K562 (cell line): ENCODE measurements at regions of chr20 and their contacts with region 1.

Region 1: GRCh38 chr20:50460460-50461267 is 49.5 kb upstream of the PTPN1 start:
- DNase-seq: peak; percentile 86 to 88 (median 87)
- ATAC-seq: peak; percentile 96
- H3K4me3 ChIP-seq: no peak overlapping the region
- H3K27ac ChIP-seq: no peak overlapping the region; the same call in 2 of the 3 replicates
- H3K4me1 ChIP-seq: peaks cover 24 to 26% of the 10 kb centered on the region in 2 experiments
- H3K27me3 ChIP-seq: no peaks in the 10 kb centered on the region; a peak in 1 of 5 replicates
- CTCF ChIP-seq: peak; percentile 92 to 96 (median 94)
- EP300 ChIP-seq: no peak
- POLR2A ChIP-seq: no peak
- RAD21 ChIP-seq: peak; percentile 96 to 98

Region 2: DNA sequence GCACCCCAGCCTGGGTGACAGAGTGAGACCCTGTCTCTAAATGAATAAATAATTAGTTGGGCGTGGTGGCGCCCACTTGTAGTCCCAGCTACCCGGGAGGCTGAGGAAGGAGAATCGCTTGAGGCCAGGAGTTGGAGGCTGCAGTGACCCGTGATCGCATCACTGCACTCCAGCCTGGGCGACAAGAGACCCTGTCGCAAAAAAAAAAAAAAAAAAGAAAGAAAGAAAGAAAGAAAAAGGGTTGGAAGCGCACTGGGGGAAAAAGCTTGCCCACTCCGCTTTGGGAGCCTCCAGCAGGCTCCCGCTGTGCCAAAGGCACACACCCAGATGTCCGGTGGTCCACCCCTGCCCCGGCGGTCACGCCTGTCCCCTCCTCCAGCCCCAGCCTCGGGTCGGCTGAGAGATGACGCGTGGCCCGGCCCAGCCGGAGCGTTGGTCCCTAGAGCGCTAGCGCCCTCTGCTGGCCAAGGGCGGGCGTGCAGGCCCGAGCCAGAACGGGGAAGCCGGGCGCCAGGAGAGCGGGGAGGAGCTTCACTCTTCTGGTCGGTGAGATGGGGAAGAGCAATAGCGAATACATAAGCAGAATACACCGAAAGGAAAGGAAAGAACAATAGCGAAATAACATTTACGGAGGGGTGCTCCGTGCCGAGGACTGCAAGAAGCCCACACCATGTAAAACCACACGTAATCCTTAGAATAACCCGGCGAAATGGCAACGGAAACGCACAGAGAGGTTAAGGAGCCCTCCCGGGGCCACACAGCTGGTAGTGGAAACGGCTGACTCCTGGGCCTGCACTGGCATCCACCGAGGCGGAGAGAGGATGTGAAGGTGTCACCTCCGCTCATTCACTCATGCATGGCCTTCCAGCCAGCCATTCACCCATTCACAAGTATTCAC is 389.4 kb before region 1 on chr20:
- CTCF ChIA-PET with region 1: no interaction called
- POLR2A ChIA-PET with region 1: no interaction called
- in situ Hi-C with region 1: no loop called
- intact Hi-C with region 1: loop called (anchors 10 kb)
- DNase-seq: peak; percentile 92 to 96 (median 94)
- ATAC-seq: peak; percentile 99
- H3K4me3 ChIP-seq: peak overlapping the region; percentile 27
- H3K27ac ChIP-seq: peak overlapping the region; percentile 50; the same call in 2 of the 3 replicates
- H3K4me1 ChIP-seq: peaks cover 2 to 27% of the 10 kb centered on the region in 2 experiments; a peak in 4 of 5 replicates
- H3K27me3 ChIP-seq: no peaks in the 10 kb centered on the region
- CTCF ChIP-seq: peak; percentile 98 to 99 (median 99)
- EP300 ChIP-seq: 0 out of 2 replicates have a peak, but pooled peaks have one; percentile 28
- POLR2A ChIP-seq: 0 out of 2 replicates have a peak, but pooled peaks have one; percentile 38
- RAD21 ChIP-seq: peak; percentile 99 to 100

Region 3: DNA sequence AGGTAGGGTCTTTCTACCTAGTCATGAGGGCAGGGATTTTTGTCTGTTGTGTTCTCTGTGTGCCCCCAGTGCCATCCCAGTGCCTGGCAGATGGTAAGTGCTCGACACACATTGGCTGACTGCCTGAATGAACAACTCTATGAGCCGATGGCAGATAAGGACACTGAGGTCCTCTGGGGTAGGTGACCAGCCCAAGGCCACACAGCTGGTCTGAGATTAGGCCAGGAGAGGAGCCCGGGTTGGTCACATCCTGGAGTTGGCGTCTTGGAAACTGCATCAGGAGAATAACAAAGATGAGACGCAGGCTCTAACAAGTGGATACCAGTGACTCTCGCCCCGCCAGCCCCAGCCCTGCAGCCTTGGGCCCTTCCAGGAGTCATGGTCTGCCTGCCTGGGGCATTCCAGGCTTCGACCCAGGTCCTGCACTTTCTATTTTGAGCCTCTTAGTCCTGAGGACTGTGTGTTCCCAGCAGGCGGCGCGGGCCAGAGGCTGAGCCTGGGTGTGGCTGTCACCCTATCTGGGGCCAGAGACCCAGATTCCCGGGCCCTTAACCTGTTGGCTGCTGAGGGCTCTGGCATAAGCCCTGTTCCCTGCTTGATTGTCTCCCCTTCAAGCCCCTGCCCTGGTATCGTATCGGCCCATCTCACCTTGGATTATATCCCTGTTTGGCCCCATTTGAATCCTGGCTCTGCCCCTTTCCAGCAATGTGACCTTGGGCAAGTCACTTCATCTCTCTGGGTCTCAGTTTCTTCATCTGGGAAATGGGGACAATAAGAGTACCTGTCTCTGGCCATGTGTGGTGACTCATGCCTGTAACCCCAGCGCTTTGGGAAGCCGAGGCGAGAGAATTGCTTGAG is 181.8 kb before region 1 on chr20:
- CTCF ChIA-PET with region 1: no interaction called
- POLR2A ChIA-PET with region 1: no interaction called
- in situ Hi-C with region 1: no loop called
- intact Hi-C with region 1: loop called (anchors 5 kb)
- DNase-seq: peak; percentile 70 to 86 (median 77)
- ATAC-seq: peak; percentile 90
- H3K4me3 ChIP-seq: no peak overlapping the region
- H3K27ac ChIP-seq: no peak overlapping the region; the same call in 2 of the 3 replicates
- H3K4me1 ChIP-seq: peaks cover 41 to 56% of the 10 kb centered on the region in 2 experiments
- H3K27me3 ChIP-seq: no peaks in the 10 kb centered on the region; a peak in 1 of 5 replicates
- CTCF ChIP-seq: peak; percentile 70 to 78 (median 71)
- EP300 ChIP-seq: peak; percentile 43
- POLR2A ChIP-seq: no peak
- RAD21 ChIP-seq: peak; percentile 75 to 79

Region 4: GRCh38 chr20:50292324-50293243 is 168.1 kb before region 1 on chr20:
- CTCF ChIA-PET with region 1: no interaction called
- POLR2A ChIA-PET with region 1: interaction called, 3 read pairs
- in situ Hi-C with region 1: loop called (anchors 5 kb)
- intact Hi-C with region 1: no loop called
- DNase-seq: peak; percentile 97 to 100 (median 98)
- ATAC-seq: peak; percentile 93
- H3K4me3 ChIP-seq: no peak overlapping the region
- H3K27ac ChIP-seq: peak overlapping the region; percentile 89
- H3K4me1 ChIP-seq: peaks cover 34 to 53% of the 10 kb centered on the region in 2 experiments
- H3K27me3 ChIP-seq: no peaks in the 10 kb centered on the region
- CTCF ChIP-seq: no peak
- EP300 ChIP-seq: peak; percentile 97
- POLR2A ChIP-seq: peak; percentile 36; the same call in 1 of the 2 replicates
- RAD21 ChIP-seq: peak; percentile 21 to 32; a peak in 3 of 4 replicates

Region 5: DNA sequence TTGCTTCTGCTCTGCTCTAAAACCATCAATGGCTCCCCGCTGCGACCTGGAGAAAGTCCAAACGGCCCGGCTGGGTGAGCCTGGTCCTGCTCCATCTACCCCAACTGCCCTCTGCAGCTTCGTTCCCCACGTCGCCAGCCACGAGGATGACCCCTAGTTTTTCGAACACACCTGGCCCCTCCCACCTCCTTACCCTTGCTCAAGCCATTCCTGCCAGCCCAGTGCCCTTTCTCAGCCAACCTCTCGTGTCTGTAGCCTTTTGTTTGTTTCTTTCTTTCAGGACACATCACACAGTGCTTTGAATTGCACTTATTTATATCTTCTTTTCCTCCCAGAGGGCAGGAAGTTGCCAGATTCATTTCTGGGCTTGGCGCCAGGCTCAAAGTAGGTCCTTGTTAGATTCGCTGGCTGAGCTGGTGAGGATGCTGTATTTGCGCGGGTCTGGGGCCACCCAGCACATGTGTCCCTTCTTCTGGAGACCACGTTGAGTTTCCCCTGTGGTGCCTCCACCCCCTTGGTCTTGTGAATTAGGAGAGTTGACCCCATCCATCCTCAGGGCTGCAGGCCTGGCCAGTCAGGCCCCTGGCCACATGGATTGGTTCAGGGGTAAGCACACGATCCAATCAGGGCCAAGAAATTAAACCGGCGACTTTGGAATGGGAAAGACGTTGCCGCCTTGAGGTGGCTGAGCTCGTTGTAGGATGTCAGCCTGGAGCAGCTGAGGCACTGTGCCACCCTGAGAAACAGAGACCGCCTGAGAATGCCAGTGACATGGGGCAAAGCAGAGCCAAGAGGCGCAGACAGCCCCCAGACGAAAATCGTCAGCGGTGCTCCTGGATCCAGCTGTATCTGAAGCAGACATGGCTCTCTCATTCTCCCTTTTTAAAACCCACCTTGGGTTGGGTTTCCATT is 114.0 kb before region 1 on chr20:
- CTCF ChIA-PET with region 1: interaction called, 4 read pairs
- POLR2A ChIA-PET with region 1: no interaction called
- in situ Hi-C with region 1: loop called (anchors 5 kb)
- intact Hi-C with region 1: loop called (anchors 5 kb)
- DNase-seq: no peak
- ATAC-seq: no peak
- H3K4me3 ChIP-seq: no peak overlapping the region
- H3K27ac ChIP-seq: no peak overlapping the region
- H3K4me1 ChIP-seq: peaks cover 25 to 28% of the 10 kb centered on the region in 2 experiments
- H3K27me3 ChIP-seq: no peaks in the 10 kb centered on the region
- CTCF ChIP-seq: no peak
- EP300 ChIP-seq: no peak
- POLR2A ChIP-seq: no peak
- RAD21 ChIP-seq: no peak

Region 6: GRCh38 chr20:50415516-50416113 is 45.0 kb before region 1 on chr20:
- CTCF ChIA-PET with region 1: no interaction called
- POLR2A ChIA-PET with region 1: no interaction called
- in situ Hi-C with region 1: no loop called
- intact Hi-C with region 1: loop called (anchors 2 kb)
- DNase-seq: no peak
- ATAC-seq: peak; percentile 74
- H3K4me3 ChIP-seq: no peak overlapping the region
- H3K27ac ChIP-seq: no peak overlapping the region
- H3K4me1 ChIP-seq: peaks cover 8 to 12% of the 10 kb centered on the region in 2 experiments
- H3K27me3 ChIP-seq: peaks cover 2 to 13% of the 10 kb centered on the region in 2 experiments; a peak in 3 of 5 replicates
- CTCF ChIP-seq: no peak
- EP300 ChIP-seq: no peak
- POLR2A ChIP-seq: no peak
- RAD21 ChIP-seq: no peak

Region 7: GRCh38 chr20:50427740-50428462 is 32.8 kb before region 1 on chr20:
- CTCF ChIA-PET with region 1: no interaction called
- POLR2A ChIA-PET with region 1: no interaction called
- in situ Hi-C with region 1: no loop called
- intact Hi-C with region 1: no loop called
- DNase-seq: peak in 1 of 4 experiments; percentile 24
- ATAC-seq: no peak
- H3K4me3 ChIP-seq: no peak overlapping the region
- H3K27ac ChIP-seq: peak overlapping the region; percentile 26; the same call in 1 of the 3 replicates
- H3K4me1 ChIP-seq: peaks cover 34 to 39% of the 10 kb centered on the region in 2 experiments
- H3K27me3 ChIP-seq: no peaks in the 10 kb centered on the region
- CTCF ChIP-seq: no peak
- EP300 ChIP-seq: no peak
- POLR2A ChIP-seq: no peak
- RAD21 ChIP-seq: no peak

Region 8: DNA sequence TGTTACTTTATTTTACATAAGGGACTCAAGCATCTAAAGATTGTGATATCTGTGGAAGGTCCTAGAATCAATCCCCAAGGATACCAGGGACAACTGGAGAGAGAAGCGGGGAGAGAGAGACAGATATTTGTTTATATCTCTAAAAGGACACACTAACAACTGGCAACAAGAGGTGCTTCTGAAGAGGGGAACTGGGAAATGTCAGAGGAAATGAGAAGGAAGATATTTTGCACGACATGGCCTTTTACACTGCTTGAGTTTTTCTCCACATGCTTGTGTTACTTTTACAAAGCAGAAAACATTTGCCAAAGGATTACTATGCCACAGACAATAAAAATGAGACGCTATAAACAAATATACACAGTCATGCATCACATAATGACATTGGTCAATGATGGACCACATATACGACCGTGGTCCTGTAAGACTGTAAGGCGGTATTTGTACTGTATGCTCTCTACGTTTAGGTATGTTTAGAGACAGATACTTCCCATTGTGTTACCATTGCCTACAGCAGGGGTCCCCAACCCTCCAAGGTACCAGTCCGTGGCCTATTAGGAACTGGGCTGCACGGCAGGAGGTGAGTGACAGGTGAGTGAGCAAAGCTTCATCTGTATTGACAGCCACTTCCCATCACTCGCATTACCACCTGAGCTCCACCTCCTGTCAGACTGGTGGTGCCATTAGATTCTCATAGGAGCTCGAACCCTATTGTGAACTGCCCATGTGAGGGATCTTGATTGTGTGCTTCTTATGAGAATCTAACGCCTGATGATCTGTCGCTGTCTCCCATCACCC is 15.1 kb before region 1 on chr20:
- CTCF ChIA-PET with region 1: no interaction called
- POLR2A ChIA-PET with region 1: no interaction called
- in situ Hi-C with region 1: no loop called
- intact Hi-C with region 1: no loop called
- DNase-seq: no peak
- ATAC-seq: no peak
- H3K4me3 ChIP-seq: no peak overlapping the region
- H3K27ac ChIP-seq: no peak overlapping the region
- H3K4me1 ChIP-seq: peaks cover 10% of the 10 kb centered on the region in 2 experiments; a peak in 4 of 5 replicates
- H3K27me3 ChIP-seq: peaks cover 0 to 4% of the 10 kb centered on the region in 2 experiments; a peak in 1 of 5 replicates
- CTCF ChIP-seq: 0 out of 6 replicates have a peak, but pooled peaks of 1 of the 3 experiments have one; percentile 0
- EP300 ChIP-seq: no peak
- POLR2A ChIP-seq: no peak
- RAD21 ChIP-seq: no peak

Region 9: DNA sequence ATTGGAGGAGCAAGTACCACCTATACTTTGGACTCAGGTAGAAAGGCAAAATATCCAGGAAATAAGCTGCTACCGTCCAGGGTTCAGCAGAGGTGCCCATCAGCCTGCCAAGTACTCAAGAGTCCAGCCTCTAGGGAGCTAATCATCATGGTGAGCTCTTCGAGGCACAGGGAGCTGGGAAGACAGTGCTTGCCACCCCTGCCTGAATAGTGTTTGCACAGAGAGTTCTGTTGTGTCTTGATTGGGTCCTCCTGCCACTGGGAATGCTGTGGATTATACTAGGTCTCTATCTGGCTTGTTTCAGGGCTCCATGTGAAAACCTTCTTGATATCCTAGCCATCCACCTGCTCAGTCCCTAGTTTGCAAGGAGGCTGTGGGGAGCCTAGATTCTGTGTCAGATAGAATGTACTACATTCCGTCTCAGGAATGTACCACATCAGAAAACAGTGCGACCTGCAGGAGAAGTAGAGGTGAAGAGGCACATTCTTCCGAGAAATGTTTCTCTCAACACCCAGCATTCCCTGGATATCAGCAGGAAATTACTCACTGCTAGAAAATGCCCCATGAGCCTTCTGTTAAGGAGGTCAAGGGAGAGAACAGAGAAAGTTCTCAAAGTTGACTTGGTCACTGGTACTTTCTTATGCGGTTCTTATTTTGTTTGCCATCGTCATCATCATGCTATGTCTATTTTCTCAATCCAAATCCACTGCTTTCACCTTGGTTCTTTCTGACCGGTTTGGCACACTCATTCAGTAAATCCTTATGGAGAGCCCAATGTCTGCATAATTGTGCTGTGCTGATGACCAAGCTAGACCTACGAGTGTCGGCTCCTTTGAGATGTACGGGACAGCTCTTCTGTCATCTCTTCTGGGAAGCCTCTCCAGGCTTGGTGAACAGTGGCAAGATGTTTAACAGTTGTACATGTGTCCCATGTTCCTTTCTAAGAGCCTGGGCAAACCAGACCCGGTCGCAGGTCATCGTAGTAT is 80.2 kb after region 1 on chr20:
- CTCF ChIA-PET with region 1: no interaction called
- POLR2A ChIA-PET with region 1: no interaction called
- in situ Hi-C with region 1: no loop called
- intact Hi-C with region 1: no loop called
- DNase-seq: no peak
- ATAC-seq: peak; percentile 50
- H3K4me3 ChIP-seq: no peak overlapping the region
- H3K27ac ChIP-seq: peak overlapping the region; percentile 71; the same call in 2 of the 3 replicates
- H3K4me1 ChIP-seq: peaks cover 5 to 23% of the 10 kb centered on the region in 2 experiments; a peak in 4 of 5 replicates
- H3K27me3 ChIP-seq: no peaks in the 10 kb centered on the region
- CTCF ChIP-seq: no peak; a peak in 1 of 6 replicates
- EP300 ChIP-seq: no peak
- POLR2A ChIP-seq: no peak
- RAD21 ChIP-seq: no peak

Region 10: GRCh38 chr20:50575847-50576720 is 115.4 kb after region 1 on chr20:
- CTCF ChIA-PET with region 1: interaction called, 3 read pairs
- POLR2A ChIA-PET with region 1: no interaction called
- in situ Hi-C with region 1: no loop called
- intact Hi-C with region 1: loop called (anchors 1 kb)
- DNase-seq: peak; percentile 44 to 51 (median 47)
- ATAC-seq: peak; percentile 81
- H3K4me3 ChIP-seq: no peak overlapping the region
- H3K27ac ChIP-seq: no peak overlapping the region
- H3K4me1 ChIP-seq: peaks cover 4 to 10% of the 10 kb centered on the region in 2 experiments; a peak in 2 of 5 replicates
- H3K27me3 ChIP-seq: no peaks in the 10 kb centered on the region
- CTCF ChIP-seq: peak; percentile 57 to 67 (median 64)
- EP300 ChIP-seq: no peak
- POLR2A ChIP-seq: no peak
- RAD21 ChIP-seq: peak; percentile 51 to 70